MCF 10A (cell line): ENCODE measurements at regions of chr6 and their contacts with region 1.

Region 1: GRCh38 chr6:22251331-22251730 is 45.5 kb downstream of the PRL start:
- DNase-seq: peak; percentile 52
- H3K4me3 Mint-ChIP-seq: no peak overlapping the region
- H3K27ac Mint-ChIP-seq: peak overlapping the region; percentile 85
- H3K4me1 Mint-ChIP-seq: peaks cover 33% of the 10 kb centered on the region
- H3K27me3 Mint-ChIP-seq: no peaks in the 10 kb centered on the region
- CTCF ChIP-seq: no peak

Region 2: DNA sequence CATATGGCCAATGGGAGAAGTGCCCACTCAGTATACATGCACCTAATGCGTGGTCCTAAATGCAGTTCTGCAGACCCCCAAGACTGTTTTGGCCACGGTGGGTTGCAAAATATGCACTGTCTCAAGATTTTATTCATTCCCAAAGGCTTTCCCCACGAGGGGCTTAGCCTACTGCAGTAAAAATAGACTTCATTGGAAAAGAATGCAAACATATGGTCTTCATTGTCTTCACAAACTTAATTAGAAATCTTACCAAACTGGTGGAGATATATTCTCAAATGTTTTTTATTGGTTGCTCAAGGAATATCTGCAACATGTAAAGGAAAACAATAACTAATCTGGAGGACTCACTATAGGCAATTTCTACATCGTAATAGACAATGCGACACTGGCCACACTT is 77.1 kb after region 1 on chr6:
- CTCF ChIA-PET with region 1: no interaction called
- POLR2A ChIA-PET with region 1: no interaction called
- intact Hi-C with region 1: no loop called
- DNase-seq: no peak
- H3K4me3 Mint-ChIP-seq: no peak overlapping the region
- H3K27ac Mint-ChIP-seq: no peak overlapping the region
- H3K4me1 Mint-ChIP-seq: no peaks in the 10 kb centered on the region
- H3K27me3 Mint-ChIP-seq: no peaks in the 10 kb centered on the region
- CTCF ChIP-seq: no peak

Region 3: DNA sequence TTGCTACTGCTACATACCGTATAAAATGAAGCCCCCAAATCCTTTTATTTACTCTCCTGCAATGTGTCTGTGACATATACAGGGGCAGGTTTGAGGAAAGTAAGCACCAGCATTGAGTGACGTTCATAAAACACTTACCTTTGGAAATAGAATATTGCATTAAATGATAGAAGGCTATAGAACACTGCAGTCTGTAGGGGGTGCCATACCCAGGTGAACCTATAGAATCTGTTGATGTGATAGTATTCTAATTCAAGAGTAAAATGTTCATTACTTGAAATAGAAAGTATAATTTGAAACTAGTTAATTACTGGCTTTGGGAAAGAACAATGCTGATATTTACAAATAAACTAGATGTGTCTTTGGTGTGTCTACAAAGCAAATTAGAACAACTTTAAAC is 92.5 kb after region 1 on chr6:
- CTCF ChIA-PET with region 1: no interaction called
- POLR2A ChIA-PET with region 1: no interaction called
- intact Hi-C with region 1: no loop called
- DNase-seq: peak; percentile 16
- H3K4me3 Mint-ChIP-seq: no peak overlapping the region
- H3K27ac Mint-ChIP-seq: no peak overlapping the region
- H3K4me1 Mint-ChIP-seq: no peaks in the 10 kb centered on the region
- H3K27me3 Mint-ChIP-seq: no peaks in the 10 kb centered on the region
- CTCF ChIP-seq: no peak

Region 4: DNA sequence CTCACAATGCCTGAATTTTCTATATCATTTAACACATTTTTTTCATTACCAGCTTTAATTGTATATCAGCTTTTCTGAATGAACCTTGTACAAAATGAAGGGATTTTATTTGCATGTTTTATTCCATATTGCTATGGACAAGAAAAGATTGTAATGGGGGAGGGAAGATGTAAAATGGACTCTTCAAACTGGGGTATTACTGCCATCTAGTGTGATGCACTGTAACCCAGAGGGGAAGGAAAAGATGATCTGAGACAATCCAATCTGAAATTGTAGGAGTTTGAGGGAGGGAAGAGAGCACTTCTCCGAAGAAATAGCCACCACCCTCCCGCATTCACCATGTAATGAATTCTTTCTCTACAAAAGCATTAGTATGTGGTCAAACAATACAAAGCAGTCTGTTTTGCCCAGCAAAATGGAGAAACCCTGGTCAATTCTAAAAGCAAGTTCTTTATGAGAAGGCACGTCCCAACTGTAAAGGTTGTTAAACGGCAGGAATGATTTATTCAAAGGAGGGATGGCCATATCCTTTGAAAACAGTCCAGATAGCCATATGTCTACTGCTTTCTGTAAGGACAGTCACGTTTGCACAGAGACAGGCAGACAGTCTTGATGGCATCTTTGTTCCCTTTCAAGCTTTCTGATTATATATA is 1195.2 kb after region 1 on chr6:
- CTCF ChIA-PET with region 1: interaction called, 4 read pairs
- POLR2A ChIA-PET with region 1: no interaction called
- intact Hi-C with region 1: loop called (anchors 10 kb)
- DNase-seq: peak; percentile 47
- H3K4me3 Mint-ChIP-seq: no peak overlapping the region
- H3K27ac Mint-ChIP-seq: no peak overlapping the region
- H3K4me1 Mint-ChIP-seq: no peaks in the 10 kb centered on the region
- H3K27me3 Mint-ChIP-seq: no peaks in the 10 kb centered on the region
- CTCF ChIP-seq: peak; percentile 41